ENCODE measurements at regions of chr5 and their contacts with region 1.

Region 1: DNA sequence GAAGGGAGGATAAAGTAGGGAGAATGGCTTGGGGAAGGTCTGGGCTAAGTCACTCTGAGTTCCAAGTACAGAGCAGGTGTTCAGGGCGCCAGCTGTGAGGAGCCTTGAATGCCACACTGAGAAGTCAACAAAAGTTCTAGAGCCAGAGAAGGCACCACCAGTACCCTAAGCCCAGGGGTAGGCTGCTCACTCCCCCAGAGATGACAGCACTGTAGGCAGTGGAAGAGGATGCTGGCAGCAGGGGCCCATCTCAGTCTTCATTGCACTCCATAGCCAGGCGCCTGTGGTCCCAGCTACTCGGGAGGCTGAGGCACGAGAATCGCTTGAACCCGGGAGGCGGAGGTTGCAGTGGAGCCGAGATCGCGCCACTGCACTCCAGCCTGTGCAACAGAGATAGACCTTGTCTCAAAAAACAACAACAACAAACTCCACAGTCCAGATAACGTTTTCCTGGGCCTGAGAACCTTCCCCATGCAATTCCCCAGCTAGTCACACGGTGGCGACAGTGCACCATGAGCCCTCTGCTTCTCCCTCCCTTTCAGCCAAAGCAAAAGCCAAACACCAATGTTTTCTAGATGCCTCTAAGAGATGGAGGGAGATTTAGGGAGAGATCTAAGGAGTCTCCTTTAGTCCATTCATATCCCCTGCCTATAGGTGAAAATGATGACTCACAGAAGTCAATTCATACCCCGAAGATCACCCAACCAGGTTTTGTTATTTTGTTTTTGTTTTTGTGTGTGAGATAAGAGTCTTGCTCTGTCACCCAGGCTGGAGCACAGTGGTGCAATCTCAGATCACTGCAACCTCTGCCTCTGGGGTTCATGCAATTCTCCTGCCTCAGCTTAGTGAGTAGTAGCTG is 19.8 kb upstream of the NSD1 start:
- DNase-seq: peak; percentile 59 to 83 (median 75)
- ATAC-seq: peak; percentile 77
- H3K4me3 ChIP-seq: no peak overlapping the region
- H3K4me3 Mint-ChIP-seq: peak overlapping the region in 1 of 10 donors; percentile 47
- H3K27ac ChIP-seq: no peak overlapping the region
- H3K27ac Mint-ChIP-seq: peak overlapping the region in 3 of 9 donors; percentile 33 to 80 (median 67)
- H3K4me1 ChIP-seq: peaks cover 9 to 12% of the 10 kb centered on the region in 2 donors
- H3K4me1 Mint-ChIP-seq: peaks cover 10 to 30% (median 20%) of the 10 kb centered on the region in 7 donors
- H3K27me3 ChIP-seq: no peaks in the 10 kb centered on the region
- H3K27me3 Mint-ChIP-seq: no peaks in the 10 kb centered on the region

Region 2: DNA sequence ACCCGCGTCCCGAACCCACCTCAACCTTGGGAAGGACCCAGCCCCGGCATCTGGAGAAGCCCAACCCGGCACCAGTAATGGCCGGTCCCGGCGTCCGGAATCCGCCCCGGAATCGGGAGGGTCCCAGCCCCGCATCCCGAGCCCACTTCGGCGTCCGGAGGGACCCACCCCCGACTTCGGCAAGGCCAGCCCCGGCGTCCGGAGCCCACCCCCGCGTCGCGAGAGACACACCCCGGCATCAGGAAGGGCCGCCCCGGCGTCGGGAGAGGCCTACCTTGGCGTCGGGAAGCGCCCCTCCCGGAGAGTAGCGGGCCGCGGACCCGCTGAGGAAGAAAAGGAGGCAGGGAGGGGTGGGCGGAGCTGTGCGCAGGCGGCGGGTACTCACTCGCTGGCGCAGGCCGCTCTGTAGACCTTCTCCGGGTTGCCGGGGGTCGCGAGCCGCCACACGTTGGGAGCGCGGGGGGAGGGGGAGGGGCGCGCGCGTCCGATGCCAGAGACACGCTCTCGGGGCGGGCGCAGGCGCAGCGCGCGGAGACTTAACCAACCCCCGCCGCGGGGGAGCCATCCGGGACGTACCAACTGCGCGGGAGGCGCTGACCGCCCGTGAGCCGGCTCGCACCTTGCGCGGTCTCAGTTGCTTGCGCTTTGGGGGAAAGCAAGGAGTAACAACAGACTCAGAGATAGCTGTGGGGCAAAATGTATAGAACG is 107.4 kb before region 1 on chr5 and contains the start of gene UIMC1:
- CTCF ChIA-PET with region 1: no interaction called
- POLR2A ChIA-PET with region 1: no interaction called
- intact Hi-C with region 1: no loop called
- DNase-seq: peak; percentile 84 to 96 (median 89)
- ATAC-seq: peak; percentile 96
- H3K4me3 ChIP-seq: peak within 1 kb of the TSS; percentile 75
- H3K4me3 Mint-ChIP-seq: peak within 1 kb of the TSS; percentile 90 to 96 (median 94)
- H3K27ac ChIP-seq: peak within 1 kb of the TSS; percentile 85
- H3K27ac Mint-ChIP-seq: peak within 1 kb of the TSS; percentile 87 to 97 (median 93)
- H3K4me1 ChIP-seq: peaks cover 18% of the 10 kb centered on the region in 2 donors
- H3K4me1 Mint-ChIP-seq: peaks cover 14 to 35% (median 28%) of the 10 kb centered on the region in 7 donors
- H3K27me3 ChIP-seq: no peaks in the 10 kb centered on the region
- H3K27me3 Mint-ChIP-seq: no peaks in the 10 kb centered on the region
- total RNA-seq, gene UIMC1: 52.9 to 60.8 (median 59.9) TPM

Region 3: DNA sequence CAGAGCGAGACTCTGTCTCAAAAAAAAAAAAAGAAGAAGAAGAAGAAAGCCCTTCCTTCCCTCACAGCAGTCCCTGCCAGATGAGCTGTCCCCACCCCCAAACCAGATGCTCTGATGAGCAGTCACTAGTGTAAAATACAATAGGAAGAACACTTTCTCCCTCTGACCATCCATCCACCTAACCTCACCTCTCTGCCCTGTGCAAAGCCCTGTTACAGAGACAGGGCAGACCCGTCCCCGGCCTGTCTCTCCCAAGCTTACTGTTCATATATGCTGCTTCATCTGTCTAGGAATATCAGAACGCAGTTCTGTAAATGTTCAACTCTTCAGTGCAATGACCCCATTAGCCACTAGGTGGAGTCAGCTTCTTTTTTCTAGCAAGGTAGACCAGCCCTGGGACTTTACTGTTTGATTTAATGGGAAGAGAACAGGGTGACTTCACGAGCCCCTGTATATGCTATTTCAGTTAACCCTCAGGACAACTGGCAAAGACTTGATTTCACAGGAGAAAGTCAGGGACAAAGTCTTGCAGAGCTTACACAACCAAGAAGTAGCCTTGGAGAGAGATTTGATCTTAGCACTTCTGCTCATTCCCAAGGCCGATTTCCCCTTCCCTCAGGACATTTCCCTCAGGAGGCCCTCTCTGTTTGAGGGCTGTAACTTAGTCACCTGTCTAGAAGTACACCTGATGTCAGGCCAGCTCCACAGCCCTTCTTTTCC is 42.0 kb before region 1 on chr5:
- CTCF ChIA-PET with region 1: interaction called, 19 read pairs
- POLR2A ChIA-PET with region 1: interaction called, 3 read pairs
- intact Hi-C with region 1: loop called (anchors 1 kb)
- DNase-seq: peak in 8 of 9 donors; percentile 41 to 70 (median 60)
- ATAC-seq: peak; percentile 90
- H3K4me3 ChIP-seq: no peak overlapping the region
- H3K4me3 Mint-ChIP-seq: peak overlapping the region in 2 of 10 donors; percentile 5 to 57
- H3K27ac ChIP-seq: no peak overlapping the region
- H3K27ac Mint-ChIP-seq: peak overlapping the region in 2 of 9 donors; percentile 15 to 43
- H3K4me1 ChIP-seq: no peaks in the 10 kb centered on the region
- H3K4me1 Mint-ChIP-seq: peaks cover 2 to 12% (median 5%) of the 10 kb centered on the region in 7 donors
- H3K27me3 ChIP-seq: no peaks in the 10 kb centered on the region
- H3K27me3 Mint-ChIP-seq: no peaks in the 10 kb centered on the region

Region 4: GRCh38 chr5:177195307-177195952 is 81.6 kb after region 1 on chr5:
- CTCF ChIA-PET with region 1: interaction called, 4 read pairs
- POLR2A ChIA-PET with region 1: interaction called, 4 read pairs
- intact Hi-C with region 1: loop called (anchors 5 to 10 kb)
- DNase-seq: no peak
- ATAC-seq: no peak
- H3K4me3 ChIP-seq: no peak overlapping the region
- H3K4me3 Mint-ChIP-seq: no peak overlapping the region
- H3K27ac ChIP-seq: no peak overlapping the region
- H3K27ac Mint-ChIP-seq: peak overlapping the region in 3 of 9 donors; percentile 57 to 77 (median 75)
- H3K4me1 ChIP-seq: no peaks in the 10 kb centered on the region
- H3K4me1 Mint-ChIP-seq: peaks cover 8 to 18% (median 13%) of the 10 kb centered on the region in 7 donors
- H3K27me3 ChIP-seq: no peaks in the 10 kb centered on the region
- H3K27me3 Mint-ChIP-seq: no peaks in the 10 kb centered on the region

Region 5: DNA sequence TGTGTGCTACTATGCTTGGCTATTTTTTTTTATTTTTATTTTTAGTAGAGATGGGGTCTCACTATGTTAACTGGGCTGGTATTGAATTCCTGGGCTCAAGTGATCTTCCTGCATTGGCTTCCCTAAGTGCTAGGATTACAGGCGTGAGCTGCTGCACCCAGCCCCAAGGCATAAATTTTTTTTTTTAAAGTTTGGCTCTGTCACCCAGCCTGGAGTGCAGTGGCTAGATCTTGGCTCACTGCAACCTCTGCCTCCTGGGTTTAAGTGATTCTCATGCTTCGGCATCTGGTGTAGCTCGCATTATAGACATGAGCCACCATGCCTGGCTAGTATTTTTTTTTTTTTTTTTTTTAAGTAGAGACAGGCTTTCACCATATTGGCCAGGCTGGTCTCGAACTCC is 119.4 kb after region 1 on chr5:
- CTCF ChIA-PET with region 1: no interaction called
- POLR2A ChIA-PET with region 1: no interaction called
- intact Hi-C with region 1: loop called (anchors 5 kb)
- DNase-seq: no peak
- ATAC-seq: no peak
- H3K4me3 ChIP-seq: no peak overlapping the region
- H3K4me3 Mint-ChIP-seq: no peak overlapping the region
- H3K27ac ChIP-seq: no peak overlapping the region
- H3K27ac Mint-ChIP-seq: peak overlapping the region in 3 of 9 donors; percentile 31 to 54 (median 52)
- H3K4me1 ChIP-seq: no peaks in the 10 kb centered on the region
- H3K4me1 Mint-ChIP-seq: peaks cover 14 to 53% (median 27%) of the 10 kb centered on the region in 7 donors
- H3K27me3 ChIP-seq: no peaks in the 10 kb centered on the region
- H3K27me3 Mint-ChIP-seq: no peaks in the 10 kb centered on the region

Region 6: GRCh38 chr5:177303121-177303924 is 189.5 kb after region 1 on chr5 and contains the starts of genes PRELID1 and RAB24:
- CTCF ChIA-PET with region 1: interaction called, 3 read pairs
- POLR2A ChIA-PET with region 1: no interaction called
- intact Hi-C with region 1: loop called (anchors 1 to 2 kb)
- DNase-seq: peak; percentile 78 to 95 (median 85)
- ATAC-seq: peak; percentile 80
- H3K4me3 ChIP-seq: peak within 1 kb of the TSS; percentile 98
- H3K4me3 Mint-ChIP-seq: peak within 1 kb of the TSS; percentile 84 to 95 (median 88)
- H3K27ac ChIP-seq: peak within 1 kb of the TSS; percentile 78
- H3K27ac Mint-ChIP-seq: peak within 1 kb of the TSS; percentile 73 to 96 (median 90)
- H3K4me1 ChIP-seq: peaks cover 46 to 49% of the 10 kb centered on the region in 2 donors
- H3K4me1 Mint-ChIP-seq: peaks cover 52 to 76% (median 74%) of the 10 kb centered on the region in 7 donors
- H3K27me3 ChIP-seq: no peaks in the 10 kb centered on the region
- H3K27me3 Mint-ChIP-seq: no peaks in the 10 kb centered on the region
- total RNA-seq, gene PRELID1: 49.0 to 172 (median 57.2) TPM
- total RNA-seq, gene RAB24: 18.0 to 47.5 (median 24.3) TPM

Region 7: DNA sequence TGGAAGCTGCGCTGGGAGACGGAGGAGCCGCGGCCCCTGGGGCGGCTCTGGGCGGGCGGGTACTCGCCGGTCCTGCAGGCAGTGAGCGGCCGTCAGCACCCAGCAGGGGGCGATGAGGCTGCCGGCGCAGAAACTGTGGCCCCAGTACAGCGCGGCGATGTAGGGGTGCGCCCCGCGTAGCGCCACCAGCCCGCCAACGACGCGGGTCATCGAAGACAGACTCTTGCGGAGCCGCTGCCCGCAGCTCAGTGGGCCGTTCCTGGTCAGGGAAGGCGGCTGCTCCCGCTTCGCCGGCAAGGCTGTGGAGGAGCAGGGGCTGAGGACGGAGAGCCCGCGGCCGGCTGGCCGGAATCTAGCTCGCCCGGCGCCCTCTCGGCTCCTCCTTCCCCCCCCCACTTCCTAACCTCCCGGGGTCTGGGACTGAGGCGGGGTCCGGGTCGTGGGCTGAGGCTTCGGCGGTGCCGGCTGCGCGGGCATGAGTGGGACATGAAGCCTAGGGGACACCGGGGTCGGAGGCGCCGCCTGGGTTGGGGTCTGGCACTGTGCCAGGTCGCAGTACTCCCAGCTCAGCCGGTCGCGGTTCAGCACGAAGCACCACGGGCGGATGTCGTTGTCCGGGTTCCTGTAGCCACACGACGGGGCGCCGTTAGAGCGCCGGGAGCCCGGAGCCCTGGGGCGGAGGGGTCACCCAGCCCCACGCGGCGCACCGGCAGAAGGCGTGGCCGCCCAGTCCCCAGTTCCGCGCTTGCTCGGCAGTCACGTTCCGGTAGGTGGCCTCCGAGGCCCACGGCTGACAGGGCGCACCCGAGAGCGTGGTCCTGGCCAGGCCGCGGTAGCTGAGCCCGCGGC is 290.2 kb after region 1 on chr5:
- CTCF ChIA-PET with region 1: interaction called, 12 read pairs
- POLR2A ChIA-PET with region 1: no interaction called
- intact Hi-C with region 1: loop called in 1 of 2 experiments (anchors 1 kb)
- DNase-seq: peak; percentile 74 to 86 (median 84)
- ATAC-seq: peak; percentile 87
- H3K4me3 ChIP-seq: peak overlapping the region; percentile 61
- H3K4me3 Mint-ChIP-seq: peak overlapping the region in 9 of 10 donors; percentile 76 to 88 (median 84)
- H3K27ac ChIP-seq: peak overlapping the region; percentile 41
- H3K27ac Mint-ChIP-seq: peak overlapping the region in 1 of 9 donors; percentile 19
- H3K4me1 ChIP-seq: peaks cover 25 to 33% of the 10 kb centered on the region in 2 donors
- H3K4me1 Mint-ChIP-seq: peaks cover 7 to 35% (median 23%) of the 10 kb centered on the region in 7 donors
- H3K27me3 ChIP-seq: no peaks in the 10 kb centered on the region
- H3K27me3 Mint-ChIP-seq: peaks cover 0 to 54% (median 0%) of the 10 kb centered on the region in 5 donors

Region 8: DNA sequence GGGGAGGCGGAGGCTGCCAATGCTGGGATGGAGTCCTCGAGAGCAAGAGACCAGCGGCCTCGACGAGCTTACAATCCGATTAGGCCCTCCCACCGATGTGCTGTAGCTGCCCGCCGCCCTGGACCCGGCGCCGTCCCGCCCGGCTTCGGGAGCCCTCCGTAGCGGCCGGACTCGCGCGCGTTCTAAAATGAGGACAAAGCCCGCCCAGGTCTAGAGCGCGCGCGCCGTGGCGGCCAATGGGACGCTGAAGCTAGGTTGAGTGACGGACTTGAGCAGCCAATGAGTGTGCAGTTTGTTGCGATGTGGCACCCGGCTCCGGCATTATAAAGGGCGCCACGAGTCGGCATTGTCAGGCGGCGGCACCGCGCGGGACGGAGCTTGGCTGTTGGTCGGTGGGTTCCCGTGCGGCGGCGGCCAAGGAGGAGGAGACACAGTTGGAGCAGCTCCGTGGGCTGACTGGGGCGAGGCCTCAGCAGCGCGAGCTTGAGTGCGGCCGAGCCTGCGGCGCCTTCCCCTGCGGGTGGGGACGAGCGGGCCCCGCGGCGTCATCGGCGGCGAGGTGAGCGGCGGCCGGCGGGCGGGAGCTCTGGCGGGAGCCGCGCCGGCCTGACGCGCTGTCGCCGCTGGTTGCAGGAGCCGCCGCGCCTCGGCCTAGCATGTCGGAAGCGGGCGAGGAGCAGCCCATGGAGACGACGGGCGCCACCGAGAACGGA is 1090.5 kb after region 1 on chr5 and contains the start of gene HNRNPAB:
- CTCF ChIA-PET with region 1: no interaction called
- POLR2A ChIA-PET with region 1: no interaction called
- intact Hi-C with region 1: loop called in 1 of 2 experiments (anchors 10 kb)
- DNase-seq: peak; percentile 93 to 98 (median 95)
- ATAC-seq: peak; percentile 92
- H3K4me3 ChIP-seq: peak within 1 kb of the TSS; percentile 94
- H3K4me3 Mint-ChIP-seq: peak within 1 kb of the TSS; percentile 90 to 100 (median 99)
- H3K27ac ChIP-seq: peak within 1 kb of the TSS; percentile 88
- H3K27ac Mint-ChIP-seq: peak within 1 kb of the TSS; percentile 91 to 100 (median 99)
- H3K4me1 ChIP-seq: peaks cover 11 to 25% of the 10 kb centered on the region in 2 donors
- H3K4me1 Mint-ChIP-seq: peaks cover 26 to 35% (median 33%) of the 10 kb centered on the region in 7 donors
- H3K27me3 ChIP-seq: no peaks in the 10 kb centered on the region
- H3K27me3 Mint-ChIP-seq: peaks cover 0 to 2% (median 0%) of the 10 kb centered on the region in 5 donors
- total RNA-seq, gene HNRNPAB: 68.9 to 197 (median 82.6) TPM

Measured in naive thymus-derived CD4-positive, alpha-beta T cell (primary cell).